Activated CD8-positive, alpha-beta T cell treated with anti-CD3 and anti-CD28 coated beads, Interleukin-2, amount 10 ng/mL, durations not matched to agents 7 days and 5 days (primary cell): ENCODE measurements at regions of chr2 and their contacts with region 1.

Region 1: DNA sequence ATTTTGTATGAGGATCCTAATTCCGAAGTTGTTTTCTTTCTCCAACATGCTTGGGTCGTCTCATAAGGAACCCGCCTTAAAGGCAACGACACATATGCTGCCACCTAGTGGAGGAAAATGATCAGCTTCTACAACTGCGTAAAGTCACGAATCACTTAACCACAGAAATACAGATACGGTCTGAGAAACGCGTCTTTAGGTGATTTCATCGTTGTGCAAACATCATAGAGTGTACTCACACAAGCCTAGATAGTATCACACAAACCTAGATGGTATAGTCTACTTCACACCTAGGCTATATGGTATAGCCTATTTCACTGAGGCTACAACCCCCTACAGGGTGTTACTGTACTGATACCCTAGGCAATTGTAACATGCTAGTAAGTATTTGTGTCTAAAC is 13.1 kb downstream of the GNLY start:
- DNase-seq: peak; percentile 87
- ATAC-seq: peak; percentile 88
- H3K4me3 Mint-ChIP-seq: no peak overlapping the region
- H3K27ac Mint-ChIP-seq: no peak overlapping the region
- H3K4me1 Mint-ChIP-seq: peaks cover 61% of the 10 kb centered on the region
- H3K27me3 Mint-ChIP-seq: peaks cover 10% of the 10 kb centered on the region

Region 2: GRCh38 chr2:85635636-85636035 is 71.7 kb before region 1 on chr2:
- CTCF ChIA-PET with region 1: interaction called, 70 read pairs
- POLR2A ChIA-PET with region 1: interaction called, 5 read pairs
- DNase-seq: no peak
- ATAC-seq: no peak
- H3K4me3 Mint-ChIP-seq: no peak overlapping the region
- H3K27ac Mint-ChIP-seq: no peak overlapping the region
- H3K4me1 Mint-ChIP-seq: peaks cover 6% of the 10 kb centered on the region
- H3K27me3 Mint-ChIP-seq: no peaks in the 10 kb centered on the region

Region 3: DNA sequence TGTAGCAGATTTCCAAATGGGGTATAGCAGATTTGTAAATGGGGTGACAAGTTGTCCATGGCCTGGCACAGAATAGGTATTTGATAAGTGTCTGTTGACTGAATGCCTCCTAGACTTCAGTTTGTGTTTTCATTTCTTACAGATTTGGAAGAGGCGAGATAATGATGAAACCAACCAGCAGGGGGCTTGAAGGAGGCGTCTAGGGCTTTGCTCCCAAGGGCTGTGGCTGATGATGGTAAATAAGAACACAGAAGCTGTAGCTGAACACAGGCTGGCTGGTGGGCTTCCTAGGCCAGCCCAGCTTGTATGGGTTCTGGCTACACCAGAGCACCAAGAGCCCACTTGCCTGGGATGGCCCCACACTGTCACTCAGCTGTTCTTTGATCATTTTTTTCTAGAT is 58.7 kb before region 1 on chr2:
- CTCF ChIA-PET with region 1: interaction called, 39 read pairs
- POLR2A ChIA-PET with region 1: no interaction called
- DNase-seq: peak; percentile 51
- ATAC-seq: peak; percentile 75
- H3K4me3 Mint-ChIP-seq: no peak overlapping the region
- H3K27ac Mint-ChIP-seq: no peak overlapping the region
- H3K4me1 Mint-ChIP-seq: no peaks in the 10 kb centered on the region
- H3K27me3 Mint-ChIP-seq: no peaks in the 10 kb centered on the region

Region 4: DNA sequence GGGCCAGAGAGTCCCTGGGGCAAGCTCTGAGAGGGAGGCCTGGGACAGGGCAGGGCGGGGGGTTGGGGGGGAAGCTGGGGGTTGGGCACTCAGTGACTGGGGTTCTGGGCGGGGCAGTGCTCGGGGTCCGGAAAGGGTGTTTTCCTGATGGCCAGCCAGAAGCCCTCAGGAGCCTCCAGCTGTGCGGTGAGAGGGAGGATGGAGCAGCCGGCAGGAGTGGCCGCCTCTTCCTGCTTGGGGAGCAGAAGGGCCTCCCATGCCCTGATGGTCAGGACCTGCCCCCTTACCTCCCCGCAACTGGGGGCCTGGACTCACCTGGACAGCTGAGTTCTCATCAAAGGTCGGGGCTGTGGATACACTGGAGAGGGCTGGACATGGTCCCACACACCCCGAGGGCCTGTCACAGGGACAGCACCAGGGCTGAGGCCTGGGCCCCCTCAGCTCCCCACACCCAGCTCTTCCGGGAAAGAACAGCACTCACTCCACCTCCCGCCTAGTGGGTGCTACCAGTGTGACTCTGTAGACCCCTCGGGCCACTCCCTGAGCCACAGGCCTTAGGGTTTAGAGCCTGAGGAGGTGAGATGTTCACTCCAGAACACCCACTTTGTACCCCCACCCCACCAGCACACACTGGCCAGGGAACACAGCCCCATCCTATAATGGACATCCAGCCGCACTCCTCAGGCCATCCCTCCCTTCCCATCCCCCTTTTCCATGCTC is 46.0 kb before region 1 on chr2:
- CTCF ChIA-PET with region 1: interaction called, 12 read pairs
- POLR2A ChIA-PET with region 1: interaction called, 3 read pairs
- DNase-seq: no peak
- ATAC-seq: no peak
- H3K4me3 Mint-ChIP-seq: no peak overlapping the region
- H3K27ac Mint-ChIP-seq: no peak overlapping the region
- H3K4me1 Mint-ChIP-seq: peaks cover 14% of the 10 kb centered on the region
- H3K27me3 Mint-ChIP-seq: no peaks in the 10 kb centered on the region

Region 5: DNA sequence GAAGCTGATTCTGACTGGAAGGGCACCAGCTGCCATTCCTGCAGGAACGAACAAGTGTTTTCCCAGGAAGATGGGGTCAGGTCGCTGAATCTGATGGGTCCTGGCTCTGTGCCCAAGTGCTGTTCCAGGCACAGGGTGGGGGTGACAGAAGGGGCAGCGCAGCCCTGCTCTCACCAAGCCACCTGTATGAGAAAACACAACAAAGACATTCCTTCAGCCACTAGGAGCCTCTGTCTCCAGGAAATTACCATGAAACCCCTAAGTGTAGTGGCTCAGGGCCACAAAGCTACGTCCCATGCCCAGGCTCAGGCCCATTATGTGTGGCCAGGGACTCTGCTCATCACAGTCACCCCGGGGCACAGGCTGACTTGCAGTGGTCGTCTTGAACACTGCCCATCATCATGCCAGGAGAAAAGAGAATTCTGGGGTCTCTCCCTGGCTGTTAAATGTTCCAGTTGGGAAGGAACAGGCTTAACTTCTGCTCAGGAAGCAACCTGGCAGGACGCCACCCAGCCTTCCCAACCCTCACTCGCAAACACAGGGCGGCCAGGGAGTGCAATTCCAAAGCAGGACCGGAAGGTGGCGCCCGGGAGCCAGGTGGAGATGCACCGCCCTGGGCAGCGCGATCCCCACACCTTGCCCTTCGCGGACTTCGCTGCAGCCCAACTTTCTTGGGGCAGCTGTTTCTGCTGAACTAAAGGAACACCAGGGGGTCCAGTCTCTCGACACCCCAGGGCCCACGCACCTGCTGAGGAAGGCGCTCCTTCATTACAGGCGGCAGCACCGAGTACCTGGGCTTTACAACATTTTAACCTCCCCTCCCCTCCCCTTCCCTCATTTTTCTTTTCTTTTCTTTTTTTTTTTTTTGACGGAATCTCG is 28.3 kb before region 1 on chr2:
- CTCF ChIA-PET with region 1: interaction called, 161 read pairs
- POLR2A ChIA-PET with region 1: interaction called, 5 read pairs
- DNase-seq: peak; percentile 84
- ATAC-seq: peak; percentile 91
- H3K4me3 Mint-ChIP-seq: no peak overlapping the region
- H3K27ac Mint-ChIP-seq: no peak overlapping the region
- H3K4me1 Mint-ChIP-seq: peaks cover 26% of the 10 kb centered on the region
- H3K27me3 Mint-ChIP-seq: peaks cover 3% of the 10 kb centered on the region

Region 6: GRCh38 chr2:85694052-85695025 is 13.0 kb before region 1 on chr2 and contains the start of gene GNLY:
- CTCF ChIA-PET with region 1: interaction called, 102 read pairs
- POLR2A ChIA-PET with region 1: interaction called, 3 read pairs
- DNase-seq: no peak
- ATAC-seq: peak; percentile 23
- H3K4me3 Mint-ChIP-seq: peak within 1 kb of the TSS; percentile 50
- H3K27ac Mint-ChIP-seq: peak within 1 kb of the TSS; percentile 75
- H3K4me1 Mint-ChIP-seq: peaks cover 48% of the 10 kb centered on the region
- H3K27me3 Mint-ChIP-seq: peaks cover under 1% of the 10 kb centered on the region
- total RNA-seq, gene GNLY: 136 to 143 TPM

Region 7: DNA sequence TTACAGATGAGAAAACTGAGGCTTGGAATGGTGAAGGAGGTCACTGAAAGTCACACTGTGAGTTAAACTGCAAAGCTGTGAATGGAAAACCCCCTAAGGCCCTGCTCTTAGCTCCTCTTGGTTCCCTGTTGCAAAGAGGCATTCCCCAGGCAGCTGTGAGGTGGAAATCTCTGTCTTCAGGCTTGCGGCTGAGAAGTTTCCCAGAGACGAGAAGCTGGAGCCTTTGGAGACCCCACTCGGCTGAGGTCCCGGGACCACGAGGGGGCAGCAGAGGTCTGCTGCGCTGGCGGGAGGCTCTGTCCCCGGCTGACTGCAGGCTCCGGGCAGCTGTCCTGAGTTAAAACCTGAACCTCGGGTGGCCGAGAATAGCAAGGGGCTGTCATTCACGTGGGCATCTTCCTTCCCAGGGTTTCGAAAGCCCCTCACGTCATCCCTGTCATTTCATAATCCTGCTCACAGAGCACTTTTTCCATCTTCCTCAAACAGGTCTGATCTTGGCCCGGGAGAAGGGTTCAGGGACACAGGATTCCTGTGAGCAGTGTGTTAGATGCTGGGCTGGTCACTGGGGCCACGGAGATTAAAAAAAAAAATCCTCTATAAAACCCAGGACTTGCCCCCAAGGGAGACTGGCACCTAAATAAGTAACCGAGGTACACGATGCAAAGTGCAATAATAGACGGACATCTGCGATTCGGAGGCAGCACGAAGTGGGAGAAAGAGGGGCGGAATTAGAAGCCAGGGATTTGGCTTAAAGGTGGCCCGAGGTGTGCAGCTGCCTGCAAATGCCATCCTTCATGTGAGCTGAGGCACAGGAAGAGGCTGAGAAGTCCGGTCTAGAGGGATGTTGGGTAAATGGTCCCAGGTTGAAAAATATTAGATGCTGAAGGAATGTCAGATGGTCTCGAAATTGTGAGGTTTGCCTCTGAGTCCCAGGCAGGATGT is 21.9 kb after region 1 on chr2:
- CTCF ChIA-PET with region 1: interaction called, 25 read pairs
- POLR2A ChIA-PET with region 1: no interaction called
- DNase-seq: peak; percentile 80
- ATAC-seq: peak; percentile 93
- H3K4me3 Mint-ChIP-seq: no peak overlapping the region
- H3K27ac Mint-ChIP-seq: no peak overlapping the region
- H3K4me1 Mint-ChIP-seq: peaks cover 9% of the 10 kb centered on the region
- H3K27me3 Mint-ChIP-seq: peaks cover 23% of the 10 kb centered on the region

Region 8: GRCh38 chr2:85852937-85853498 is 145.7 kb after region 1 on chr2:
- CTCF ChIA-PET with region 1: no interaction called
- POLR2A ChIA-PET with region 1: no interaction called
- DNase-seq: peak; percentile 85
- ATAC-seq: peak; percentile 91
- H3K4me3 Mint-ChIP-seq: peak overlapping the region; percentile 83
- H3K27ac Mint-ChIP-seq: peak overlapping the region; percentile 100
- H3K4me1 Mint-ChIP-seq: peaks cover 57% of the 10 kb centered on the region
- H3K27me3 Mint-ChIP-seq: no peaks in the 10 kb centered on the region